AG04449 (cell line): ENCODE measurements at regions of chr4 and their contacts with region 1.

Region 1: DNA sequence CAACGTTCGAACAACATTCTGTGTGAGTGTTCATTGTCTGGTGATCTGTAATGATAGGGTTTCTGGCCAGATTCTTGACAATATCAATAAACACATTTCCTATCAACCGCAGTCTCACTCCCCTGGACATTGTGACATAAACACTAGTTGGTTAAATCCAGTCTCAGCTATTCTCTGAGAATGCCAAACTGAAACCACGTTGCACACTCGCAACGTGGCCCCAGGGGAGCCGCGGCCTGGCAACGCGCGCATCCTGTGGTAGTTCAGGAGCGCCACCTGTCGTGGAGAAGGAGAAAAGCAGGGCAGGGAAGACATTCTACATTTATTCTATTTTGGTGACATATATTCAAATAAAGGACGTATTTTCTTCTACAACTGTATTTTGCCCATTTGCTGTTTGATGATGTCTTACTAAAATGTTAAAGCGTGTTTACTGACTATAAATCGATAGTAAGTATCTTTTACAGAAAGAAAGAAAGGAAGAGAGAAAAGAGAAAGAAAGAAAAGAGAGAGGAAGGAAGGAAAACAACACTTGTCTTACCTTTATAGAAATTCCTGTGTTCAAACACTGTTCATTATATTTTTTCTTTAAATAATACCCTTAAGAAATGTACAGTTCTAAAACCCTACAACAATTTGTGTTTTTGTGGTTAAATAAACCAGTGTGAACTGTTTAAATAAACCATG is 738.3 kb upstream of the FRG1 start:
- DNase-seq: peak; percentile 21
- H3K4me3 ChIP-seq: peak overlapping the region; percentile 30
- CTCF ChIP-seq: peak; percentile 88

Region 2: GRCh38 chr4:187608001-187608421 is 1594.3 kb before region 1 on chr4:
- CTCF ChIA-PET with region 1: interaction called, 10 read pairs
- POLR2A ChIA-PET with region 1: no interaction called
- DNase-seq: peak; percentile 67
- H3K4me3 ChIP-seq: no peak overlapping the region
- CTCF ChIP-seq: no peak

Region 3: DNA sequence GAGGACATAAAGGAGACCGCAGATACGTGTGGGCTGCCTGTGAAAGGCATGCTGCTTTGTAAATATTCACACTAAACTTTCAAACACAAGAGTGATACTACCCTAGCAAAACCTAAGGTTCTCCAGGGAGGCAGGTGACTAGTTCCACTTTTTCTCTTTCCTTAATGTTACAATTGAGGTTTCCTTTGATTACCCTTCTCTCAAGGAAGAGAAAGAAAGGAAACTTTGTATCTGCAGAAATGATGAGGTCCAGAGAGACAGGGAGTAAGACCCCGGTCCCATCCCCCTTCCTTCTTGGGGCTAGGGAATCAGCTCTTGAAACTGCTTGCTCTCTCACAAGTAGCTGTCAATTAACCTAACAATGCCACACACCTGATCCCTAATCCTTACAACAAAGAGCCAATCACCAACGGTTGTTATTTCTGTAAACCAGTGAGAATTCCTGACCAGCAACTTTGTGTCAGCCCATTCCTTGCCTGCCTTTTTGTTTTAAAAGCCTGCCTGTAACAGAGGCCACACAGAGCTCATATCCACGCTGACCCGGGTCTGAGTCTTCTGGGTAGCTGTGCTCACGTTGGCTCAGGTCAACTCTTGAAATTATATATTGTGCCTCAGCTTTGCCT is 16.4 kb before region 1 on chr4:
- CTCF ChIA-PET with region 1: interaction called, 23 read pairs
- POLR2A ChIA-PET with region 1: no interaction called
- DNase-seq: no peak
- H3K4me3 ChIP-seq: no peak overlapping the region
- CTCF ChIP-seq: no peak